Cardiac septum (tissue), 1 donor: ENCODE measurements at regions of chr3 and their contacts with region 1.

Region 1: DNA sequence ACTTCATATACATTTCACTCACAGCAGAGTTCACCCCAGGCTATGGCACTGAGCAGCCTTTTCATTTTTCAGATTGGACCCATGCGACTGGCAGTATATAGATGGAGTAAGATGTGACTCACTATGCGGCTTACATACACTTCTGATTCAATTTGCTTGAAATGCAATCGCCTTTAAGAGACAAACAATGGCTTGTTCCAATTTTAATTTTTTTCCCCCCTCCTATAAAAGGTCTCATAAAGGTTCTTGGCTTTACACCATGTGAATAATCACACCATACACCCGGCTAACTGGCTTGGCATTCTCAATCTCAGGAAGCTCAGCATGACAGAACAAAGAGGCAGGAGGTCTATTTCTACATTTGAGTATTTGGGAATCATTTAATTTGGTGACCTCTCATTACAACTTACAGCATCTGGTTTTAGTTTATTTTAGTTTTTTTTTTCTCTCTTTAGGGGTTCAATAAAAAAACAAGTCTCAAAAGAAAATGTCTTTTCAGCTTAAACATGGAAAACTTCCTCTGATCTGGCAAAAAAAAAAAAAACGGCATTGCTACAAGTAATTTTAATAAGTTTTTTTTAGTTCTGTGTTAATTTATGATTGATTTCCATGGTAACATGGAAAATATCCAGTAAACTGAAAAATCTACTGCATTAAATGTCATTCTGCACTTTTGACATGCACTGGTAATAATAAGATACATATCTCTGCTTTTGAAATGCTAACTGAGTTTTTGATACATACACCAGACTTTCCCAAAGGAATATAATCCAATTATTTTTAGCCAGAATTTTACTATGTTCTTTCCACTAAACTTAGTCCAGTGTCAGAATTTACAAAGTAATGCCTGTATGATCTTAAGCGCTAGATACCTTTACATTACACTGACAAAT is 38.8 kb downstream of the GADL1 start:
- DNase-seq: no peak

Region 2: GRCh38 chr3:30768703-30769685 is 86.7 kb before region 1 on chr3:
- intact Hi-C with region 1: no loop called
- DNase-seq: no peak

Region 3: DNA sequence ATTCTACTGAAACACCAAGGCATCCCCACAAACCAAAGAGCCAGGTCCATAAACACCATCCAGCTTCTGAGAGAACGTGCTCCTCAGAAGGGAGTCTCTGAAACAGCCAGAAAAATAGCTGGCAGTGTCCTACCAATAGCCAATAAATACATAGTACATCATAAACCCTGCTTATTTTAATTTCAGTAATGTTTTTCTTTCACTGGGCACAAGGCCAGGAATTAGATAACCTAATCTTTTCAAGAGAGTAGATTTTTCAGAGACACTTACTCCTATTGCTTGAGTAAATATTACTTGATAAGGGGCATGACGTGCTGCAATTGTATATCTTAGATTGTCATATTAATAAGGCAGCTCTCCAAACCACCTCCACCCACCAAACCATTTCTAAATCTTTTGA is 16.1 kb after region 1 on chr3:
- intact Hi-C with region 1: loop called (anchors 2 kb)
- DNase-seq: no peak